ENCODE measurements at regions of chrX and their contacts with region 1.

Region 1: DNA sequence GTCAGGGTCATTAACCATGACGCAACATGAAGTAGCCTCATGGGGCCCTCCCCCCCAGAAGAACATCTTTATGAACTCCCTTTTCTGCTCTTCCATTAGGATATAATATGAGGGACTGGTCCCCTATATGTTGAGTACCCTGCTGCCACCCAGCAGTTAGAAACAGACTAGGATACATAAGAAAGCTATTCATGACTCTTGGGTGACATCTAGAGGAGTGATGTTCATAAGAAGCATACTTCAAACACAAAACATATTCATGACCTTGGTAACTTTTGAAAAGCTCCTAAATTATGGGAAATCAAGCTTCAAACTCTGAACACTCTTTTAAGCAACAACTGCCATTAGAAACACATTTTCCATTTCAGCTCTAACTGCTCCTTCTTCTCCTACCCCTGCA is 155.2 kb upstream of the SPIN4 start:
- DNase-seq: peak; percentile 13
- H3K4me3 ChIP-seq: no peak overlapping the region
- H3K27ac ChIP-seq: no peak overlapping the region
- H3K4me1 ChIP-seq: peaks cover 6% of the 10 kb centered on the region
- H3K27me3 ChIP-seq: no peaks in the 10 kb centered on the region
- CTCF ChIP-seq: peak; percentile 32 to 44

Region 2: DNA sequence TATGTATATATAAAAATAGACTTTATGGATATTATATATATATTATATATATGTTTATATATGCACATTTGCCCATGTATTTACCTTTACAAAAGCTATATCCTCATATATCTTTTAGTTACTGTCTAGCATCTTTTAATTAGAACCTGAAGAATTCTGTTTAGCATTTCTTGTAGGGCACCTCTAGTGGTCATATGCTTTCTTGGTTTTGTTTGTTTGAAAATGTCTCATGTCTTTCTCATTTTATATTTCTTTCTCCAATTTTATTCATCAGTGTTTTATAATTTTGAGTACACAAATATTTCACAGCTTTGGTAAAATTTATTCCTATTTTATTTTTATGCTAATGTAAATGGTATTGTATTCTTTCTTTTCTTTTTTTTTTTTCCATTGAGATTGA is 84.9 kb before region 1 on chrX:
- CTCF ChIA-PET with region 1: no interaction called
- dilution Hi-C with region 1: no loop called
- in situ Hi-C with region 1: no loop called
- intact Hi-C with region 1: loop called (anchors 10 kb)
- DNase-seq: no peak
- H3K4me3 ChIP-seq: no peak overlapping the region
- H3K27ac ChIP-seq: no peak overlapping the region
- H3K4me1 ChIP-seq: peaks cover 14% of the 10 kb centered on the region
- H3K27me3 ChIP-seq: no peaks in the 10 kb centered on the region
- CTCF ChIP-seq: peak; percentile 19 to 31

Region 3: GRCh38 chrX:63686878-63687714 is 180.8 kb after region 1 on chrX:
- CTCF ChIA-PET with region 1: no interaction called
- dilution Hi-C with region 1: no loop called
- in situ Hi-C with region 1: no loop called
- intact Hi-C with region 1: loop called (anchors 5 kb)
- DNase-seq: peak; percentile 41
- H3K4me3 ChIP-seq: no peak overlapping the region
- H3K27ac ChIP-seq: no peak overlapping the region
- H3K4me1 ChIP-seq: no peaks in the 10 kb centered on the region
- H3K27me3 ChIP-seq: no peaks in the 10 kb centered on the region
- CTCF ChIP-seq: peak; percentile 74 to 79